Activated T-helper 2 cell treated with anti-CD3 and anti-CD28 coated beads, Interferon-gamma antibody, Interleukin-2, Interleukin-4, amounts not matched to agents 10 μg/mL and 5 μg/mL and 100 μg/mL, durations not matched to agents 14 hours and 24 hours and 36 hours (primary cell): ENCODE measurements at regions of chr20 and their contacts with region 1.

Region 1: GRCh38 chr20:49610701-49611538 is 43.0 kb upstream of the PTGIS start:
- DNase-seq: peak; percentile 76
- H3K4me3 Mint-ChIP-seq: peak overlapping the region; percentile 22
- H3K27ac Mint-ChIP-seq: no peak overlapping the region
- H3K4me1 Mint-ChIP-seq: peaks cover 20% of the 10 kb centered on the region
- H3K27me3 Mint-ChIP-seq: no peaks in the 10 kb centered on the region

Region 2: GRCh38 chr20:49338061-49338460 is 272.9 kb before region 1 on chr20:
- intact Hi-C with region 1: loop called (anchors 2 kb)
- DNase-seq: no peak
- H3K4me3 Mint-ChIP-seq: no peak overlapping the region
- H3K27ac Mint-ChIP-seq: no peak overlapping the region
- H3K4me1 Mint-ChIP-seq: peaks cover 3% of the 10 kb centered on the region
- H3K27me3 Mint-ChIP-seq: peaks cover 11% of the 10 kb centered on the region

Region 3: GRCh38 chr20:49541733-49542513 is 69.0 kb before region 1 on chr20:
- intact Hi-C with region 1: loop called (anchors 1 kb)
- DNase-seq: peak; percentile 65
- H3K4me3 Mint-ChIP-seq: no peak overlapping the region
- H3K27ac Mint-ChIP-seq: peak overlapping the region; percentile 95
- H3K4me1 Mint-ChIP-seq: peaks cover 33% of the 10 kb centered on the region
- H3K27me3 Mint-ChIP-seq: no peaks in the 10 kb centered on the region

Region 4: GRCh38 chr20:49846206-49846807 is 235.4 kb after region 1 on chr20:
- intact Hi-C with region 1: loop called (anchors 1 kb)
- DNase-seq: peak; percentile 41
- H3K4me3 Mint-ChIP-seq: no peak overlapping the region
- H3K27ac Mint-ChIP-seq: no peak overlapping the region
- H3K4me1 Mint-ChIP-seq: peaks cover 8% of the 10 kb centered on the region
- H3K27me3 Mint-ChIP-seq: no peaks in the 10 kb centered on the region

Region 5: GRCh38 chr20:49888345-49888966 is 277.5 kb after region 1 on chr20:
- intact Hi-C with region 1: loop called (anchors 1 kb)
- DNase-seq: peak; percentile 46
- H3K4me3 Mint-ChIP-seq: no peak overlapping the region
- H3K27ac Mint-ChIP-seq: peak overlapping the region; percentile 59
- H3K4me1 Mint-ChIP-seq: peaks cover 11% of the 10 kb centered on the region
- H3K27me3 Mint-ChIP-seq: no peaks in the 10 kb centered on the region

Region 6: GRCh38 chr20:49928401-49929141 is 317.7 kb after region 1 on chr20:
- intact Hi-C with region 1: loop called (anchors 5 kb)
- DNase-seq: peak; percentile 71
- H3K4me3 Mint-ChIP-seq: no peak overlapping the region
- H3K27ac Mint-ChIP-seq: peak overlapping the region; percentile 49
- H3K4me1 Mint-ChIP-seq: peaks cover 6% of the 10 kb centered on the region
- H3K27me3 Mint-ChIP-seq: peaks cover 3% of the 10 kb centered on the region